ENCODE measurements at regions of chr1 and their contacts with region 1.

Region 1: GRCh38 chr1:47738560-47739182 is 258.5 kb downstream of the TRABD2B start:
- DNase-seq: no peak
- ATAC-seq: peak; percentile 79

Region 2: DNA sequence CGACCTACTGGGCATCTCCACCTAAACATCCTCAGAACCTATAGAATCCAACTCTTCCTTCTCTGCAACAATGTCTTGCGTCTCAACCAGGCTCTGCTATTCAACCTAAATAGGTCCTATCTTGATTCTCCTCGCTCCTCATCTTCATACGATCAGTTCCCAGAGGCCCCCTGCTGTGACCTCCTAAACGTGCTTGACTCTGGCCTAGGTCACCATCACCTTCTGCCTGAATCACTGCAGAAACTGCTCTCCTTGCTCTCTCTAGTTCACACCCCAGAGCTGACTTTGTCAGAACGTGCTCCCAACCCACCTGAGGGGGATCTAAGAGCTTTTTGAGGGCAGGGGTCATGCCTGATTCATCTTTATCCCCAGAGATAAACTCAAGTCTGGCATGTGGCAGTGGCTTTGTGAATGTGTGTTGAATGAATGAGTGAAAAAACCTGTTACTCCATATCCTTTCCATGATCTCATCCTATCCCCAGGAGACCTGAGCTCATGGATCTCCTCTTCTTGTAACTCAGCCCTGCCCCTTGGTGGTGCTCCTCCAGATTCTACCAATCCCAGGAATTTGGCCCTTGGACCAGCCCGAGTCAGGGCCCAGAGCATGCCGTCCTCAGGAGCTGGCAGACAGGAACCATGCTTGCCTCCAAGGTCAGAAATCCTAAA is 43.6 kb after region 1 on chr1:
- intact Hi-C with region 1: loop called (anchors 5 kb)
- DNase-seq: peak; percentile 63
- ATAC-seq: peak; percentile 67

Region 3: GRCh38 chr1:47894713-47895537 is 156.3 kb after region 1 on chr1:
- intact Hi-C with region 1: loop called (anchors 10 kb)
- DNase-seq: no peak
- ATAC-seq: peak; percentile 35

Region 4: GRCh38 chr1:47997289-47998200 is 258.9 kb after region 1 on chr1 and contains the start of gene TRABD2B:
- intact Hi-C with region 1: loop called (anchors 5 kb)
- DNase-seq: peak; percentile 89
- ATAC-seq: peak; percentile 80
- total RNA-seq, gene TRABD2B: 0.57 TPM

Region 5: DNA sequence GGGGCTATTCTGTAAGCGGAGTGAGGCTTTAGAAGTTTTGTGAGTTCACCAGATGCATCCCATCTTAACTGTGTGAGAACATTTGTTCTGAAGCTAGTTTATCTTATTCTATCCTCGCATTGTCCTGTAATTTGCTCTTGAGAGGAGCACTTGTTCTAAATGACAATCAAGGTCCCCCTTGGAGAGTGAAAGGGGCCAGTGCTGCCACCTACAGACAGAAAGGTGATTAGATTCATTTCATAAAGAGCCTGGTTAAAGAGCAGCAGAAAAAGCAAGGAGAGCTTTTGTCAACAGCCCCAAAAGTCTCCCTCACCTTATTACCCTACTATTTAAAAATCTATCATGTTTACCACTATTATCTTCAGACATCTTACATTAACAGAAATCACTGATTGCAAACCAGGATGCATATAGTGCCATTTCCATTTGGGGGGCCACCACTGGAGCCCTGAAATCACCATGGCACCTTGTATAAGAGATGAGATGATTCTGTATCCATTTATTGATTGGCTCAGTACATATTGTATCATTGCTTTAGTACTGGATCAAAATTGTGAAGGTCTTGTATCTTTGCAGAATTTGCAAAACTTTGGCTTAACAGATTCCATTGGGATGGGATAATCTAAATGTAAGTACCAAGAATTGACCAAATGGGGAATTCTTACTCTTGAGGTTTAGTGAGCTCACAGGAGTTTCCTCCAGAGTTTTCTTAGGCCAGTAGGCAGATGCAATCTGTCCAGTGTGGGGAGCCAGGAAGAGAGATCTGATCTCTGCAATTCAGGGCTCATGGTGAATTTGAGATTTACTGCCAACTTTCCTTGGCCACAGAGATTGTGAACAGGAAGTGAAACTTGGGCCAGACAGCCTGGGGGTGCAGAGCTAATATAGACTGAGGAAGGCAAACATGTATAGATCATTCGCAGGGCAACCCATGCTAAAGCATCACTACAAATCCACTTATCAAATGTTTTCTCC is 322.8 kb after region 1 on chr1:
- intact Hi-C with region 1: loop called (anchors 2 kb)
- DNase-seq: no peak
- ATAC-seq: peak; percentile 65

Measured in Right ventricle myocardium inferior (tissue), 1 donor.